ENCODE measurements at regions of chr2 and their contacts with region 1.

Region 1: GRCh38 chr2:187499941-187500532 is 52.0 kb upstream of the CALCRL start:
- DNase-seq: peak; percentile 61
- H3K4me3 ChIP-seq: no peak overlapping the region
- H3K27ac ChIP-seq: no peak overlapping the region
- H3K4me1 ChIP-seq: no peaks in the 10 kb centered on the region
- H3K27me3 ChIP-seq: no peaks in the 10 kb centered on the region
- CTCF ChIP-seq: peak; percentile 78

Region 2: GRCh38 chr2:187581125-187581896 is 81.3 kb after region 1 on chr2:
- intact Hi-C with region 1: loop called (anchors 2 kb)
- DNase-seq: peak; percentile 28
- H3K4me3 ChIP-seq: no peak overlapping the region
- H3K27ac ChIP-seq: no peak overlapping the region
- H3K4me1 ChIP-seq: no peaks in the 10 kb centered on the region
- H3K27me3 ChIP-seq: no peaks in the 10 kb centered on the region
- CTCF ChIP-seq: peak; percentile 49

Region 3: DNA sequence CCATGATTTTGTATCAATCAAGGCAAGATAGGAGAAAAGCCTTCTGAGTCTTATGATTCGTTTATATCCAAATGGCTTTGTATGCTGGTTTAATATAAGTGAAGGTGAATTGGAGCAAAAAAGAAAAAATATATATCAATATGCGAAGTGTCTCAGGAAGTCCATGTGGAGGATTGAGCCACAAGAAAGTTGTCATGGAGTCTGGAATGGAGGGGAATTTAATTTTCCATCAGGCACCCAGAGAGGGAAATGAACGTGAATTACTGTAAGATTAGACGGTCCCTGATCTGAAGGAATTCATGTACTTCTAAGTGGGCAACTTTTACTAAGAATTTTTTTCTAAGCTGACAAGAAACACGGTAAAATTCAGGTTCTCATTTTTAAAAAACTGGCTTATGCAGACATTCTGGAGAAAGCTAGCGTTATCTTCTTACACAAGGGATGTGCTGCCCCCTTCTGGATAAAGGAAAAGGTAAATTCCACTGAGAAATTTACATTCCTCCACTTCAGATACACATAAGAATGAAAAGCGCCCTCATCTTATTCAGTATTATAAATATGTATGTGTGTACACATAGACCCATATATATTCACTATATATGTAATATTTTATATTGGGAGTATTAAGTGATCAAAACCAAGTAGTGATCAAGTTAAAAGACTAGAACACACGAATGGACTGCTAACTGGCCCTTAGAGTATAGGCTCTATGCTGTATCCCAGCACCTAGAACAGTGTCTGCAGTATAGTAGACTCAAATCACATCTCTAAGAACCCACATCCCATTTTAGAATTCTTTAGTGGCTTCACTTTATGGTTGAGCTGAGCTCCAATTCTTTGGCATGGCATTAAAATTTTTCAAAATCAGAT is 343.2 kb after region 1 on chr2:
- intact Hi-C with region 1: loop called (anchors 5 kb)
- DNase-seq: no peak
- H3K4me3 ChIP-seq: no peak overlapping the region
- H3K27ac ChIP-seq: no peak overlapping the region
- H3K4me1 ChIP-seq: no peaks in the 10 kb centered on the region
- H3K27me3 ChIP-seq: no peaks in the 10 kb centered on the region
- CTCF ChIP-seq: peak; percentile 42

Region 4: DNA sequence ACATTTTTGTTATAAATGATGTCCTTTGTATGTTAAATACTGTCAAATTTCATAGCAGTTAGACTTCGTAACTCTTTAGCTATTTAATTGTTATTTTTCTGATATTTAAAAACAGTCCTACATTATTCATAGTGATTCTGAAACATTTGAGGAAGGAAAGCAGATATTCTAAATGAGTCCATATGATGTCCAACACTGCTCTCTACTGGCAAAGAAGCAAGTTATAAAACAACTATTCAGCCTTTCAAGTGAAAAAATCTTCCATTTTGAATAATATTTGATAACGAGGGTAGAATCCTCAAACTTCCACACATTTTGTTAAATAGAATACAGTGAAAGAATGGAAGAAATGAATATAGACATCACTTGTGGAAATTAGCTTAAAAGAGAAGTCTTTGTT is 1012.4 kb after region 1 on chr2:
- intact Hi-C with region 1: loop called (anchors 5 kb)
- DNase-seq: no peak
- H3K4me3 ChIP-seq: no peak overlapping the region
- H3K27ac ChIP-seq: no peak overlapping the region
- H3K4me1 ChIP-seq: no peaks in the 10 kb centered on the region
- H3K27me3 ChIP-seq: no peaks in the 10 kb centered on the region
- CTCF ChIP-seq: peak; percentile 34

Measured in colonic mucosa (tissue), 4 donors.